ENCODE measurements at regions of chr4 and their contacts with region 1.

Region 1: DNA sequence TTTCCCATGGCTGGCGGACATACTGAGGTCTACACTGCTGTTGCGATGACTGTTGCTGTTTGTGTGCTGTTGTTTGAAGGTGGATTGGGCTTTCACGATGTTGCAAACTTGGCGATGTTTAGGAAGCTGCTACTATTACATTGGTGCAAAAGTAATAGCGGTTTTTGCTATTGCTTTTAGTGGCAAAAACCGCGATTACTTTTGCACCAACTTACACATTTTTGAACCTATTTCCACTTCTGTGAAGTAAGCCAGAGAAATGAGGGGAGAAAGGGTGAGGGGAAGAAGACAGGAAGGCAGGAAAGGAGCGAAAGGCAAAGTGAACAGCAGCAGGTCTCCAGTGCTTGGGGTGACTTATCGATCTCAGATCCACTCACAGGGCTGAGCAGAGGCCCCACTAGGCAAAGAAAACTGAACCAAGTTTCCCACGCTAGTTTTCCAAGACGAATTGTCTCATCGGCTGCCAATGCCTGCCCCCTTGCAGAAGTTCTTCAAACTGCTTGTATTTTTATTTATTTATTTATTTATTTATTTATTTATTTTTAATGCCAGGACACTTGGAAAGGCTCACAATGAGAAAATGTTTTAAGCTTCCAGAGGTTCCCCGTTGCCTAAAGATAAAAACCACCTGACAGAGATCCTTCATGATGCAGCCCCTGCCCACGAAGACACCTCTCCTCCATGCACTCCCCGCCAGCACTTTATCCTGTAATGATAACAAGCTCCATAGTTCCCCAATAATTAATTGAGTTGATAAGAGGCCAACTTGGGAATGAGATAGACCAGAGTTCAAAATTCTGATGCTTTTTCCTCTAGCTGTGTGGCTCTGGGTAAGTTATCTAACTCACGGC is 43.3 kb downstream of the QDPR start:
- DNase-seq: peak; percentile 78
- H3K4me3 ChIP-seq: no peak overlapping the region
- H3K27ac ChIP-seq: no peak overlapping the region
- H3K4me1 ChIP-seq: no peaks in the 10 kb centered on the region
- H3K27me3 ChIP-seq: no peaks in the 10 kb centered on the region

Region 2: GRCh38 chr4:16205298-16206164 is 1263.1 kb before region 1 on chr4:
- in situ Hi-C with region 1: no loop called
- DNase-seq: peak; percentile 58
- H3K4me3 ChIP-seq: no peak overlapping the region
- H3K27ac ChIP-seq: no peak overlapping the region
- H3K4me1 ChIP-seq: peaks cover 8% of the 10 kb centered on the region
- H3K27me3 ChIP-seq: no peaks in the 10 kb centered on the region

Region 3: DNA sequence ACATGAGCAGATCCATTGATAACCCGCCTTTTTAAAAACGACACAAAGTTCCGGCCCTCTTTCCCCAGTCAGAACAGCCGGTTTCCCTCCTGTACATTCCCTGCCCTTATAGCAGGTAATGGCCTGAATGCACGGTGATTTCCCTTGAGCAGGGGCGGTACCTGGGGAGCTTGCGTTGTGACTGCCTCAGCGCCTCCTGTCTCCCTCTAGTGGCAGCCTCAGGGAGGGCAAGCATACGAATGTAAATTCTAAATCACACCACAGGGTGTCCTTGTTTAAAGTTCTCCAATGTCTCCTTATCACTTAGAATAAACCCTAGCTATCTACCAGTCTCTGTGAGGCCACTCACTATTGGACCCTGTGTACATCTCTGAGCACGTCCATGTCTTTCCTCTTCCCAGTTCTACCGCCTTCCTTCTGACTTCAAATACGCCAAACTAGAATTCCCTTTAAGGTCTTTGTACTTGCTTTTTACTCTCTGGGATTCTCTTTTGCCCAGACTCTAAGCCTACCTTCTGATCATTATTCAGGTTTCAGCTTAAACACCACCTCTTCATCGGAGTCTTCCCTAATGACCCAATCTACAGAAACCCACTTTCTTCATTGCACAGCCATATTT is 551.8 kb before region 1 on chr4:
- in situ Hi-C with region 1: loop called (anchors 25 kb)
- DNase-seq: peak; percentile 25
- H3K4me3 ChIP-seq: no peak overlapping the region
- H3K27ac ChIP-seq: no peak overlapping the region
- H3K4me1 ChIP-seq: peaks cover 5% of the 10 kb centered on the region; the same call in 1 of the 2 replicates
- H3K27me3 ChIP-seq: no peaks in the 10 kb centered on the region

Region 4: GRCh38 chr4:17347445-17347844 is 121.2 kb before region 1 on chr4:
- in situ Hi-C with region 1: loop called (anchors 5 kb)
- DNase-seq: peak; percentile 63
- H3K4me3 ChIP-seq: no peak overlapping the region
- H3K27ac ChIP-seq: no peak overlapping the region
- H3K4me1 ChIP-seq: no peaks in the 10 kb centered on the region
- H3K27me3 ChIP-seq: no peaks in the 10 kb centered on the region

Measured in GM23248 (cell line).